ENCODE measurements at regions of chr1 and their contacts with region 1.

Region 1: DNA sequence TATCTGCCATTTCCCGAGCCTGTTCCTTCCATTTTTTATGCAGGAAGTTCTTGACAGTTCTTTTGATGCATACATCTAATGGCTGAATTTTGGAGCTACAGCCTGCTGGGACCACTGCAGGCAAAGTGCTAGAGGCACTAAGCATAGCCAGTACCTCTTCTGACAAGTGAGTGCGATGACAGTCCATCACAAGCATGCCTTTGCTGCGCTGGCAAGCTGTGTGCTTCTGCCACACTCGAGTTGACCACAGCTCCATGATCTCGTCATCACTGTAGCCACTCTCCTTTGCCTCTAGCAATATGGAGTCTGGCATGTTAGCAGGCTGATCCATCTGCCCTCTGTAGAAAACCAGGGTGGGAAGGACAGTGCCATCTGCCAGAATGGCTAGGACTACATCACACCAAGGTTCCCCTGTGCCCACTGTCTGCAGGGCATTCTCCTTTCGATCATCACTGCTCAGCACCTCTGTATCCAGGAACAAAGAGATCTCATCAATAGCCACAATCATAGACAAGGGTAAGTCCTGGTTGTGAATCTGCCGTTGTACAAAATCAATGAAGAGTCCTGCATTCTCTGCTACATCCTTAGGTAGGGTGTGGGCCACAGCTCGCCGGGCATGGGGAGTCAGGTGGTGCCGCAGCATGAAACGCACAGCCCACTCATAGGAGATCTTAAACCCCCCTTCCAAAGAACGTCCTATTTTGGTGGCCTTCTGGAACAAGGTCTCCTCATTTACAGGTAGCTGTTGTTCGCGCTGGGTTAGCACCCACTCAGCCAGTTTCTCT is 6.0 kb downstream of the PSMB4 start:
- DNase-seq: no peak
- ATAC-seq: no peak
- H3K4me3 ChIP-seq: no peak overlapping the region
- H3K27ac ChIP-seq: no peak overlapping the region
- H3K4me1 ChIP-seq: peaks cover 0 to 1% of the 10 kb centered on the region in 2 experiments; a peak in 3 of 5 replicates
- H3K27me3 ChIP-seq: no peaks in the 10 kb centered on the region
- CTCF ChIP-seq: no peak
- EP300 ChIP-seq: no peak
- POLR2A ChIP-seq: no peak
- RAD21 ChIP-seq: no peak

Region 2: DNA sequence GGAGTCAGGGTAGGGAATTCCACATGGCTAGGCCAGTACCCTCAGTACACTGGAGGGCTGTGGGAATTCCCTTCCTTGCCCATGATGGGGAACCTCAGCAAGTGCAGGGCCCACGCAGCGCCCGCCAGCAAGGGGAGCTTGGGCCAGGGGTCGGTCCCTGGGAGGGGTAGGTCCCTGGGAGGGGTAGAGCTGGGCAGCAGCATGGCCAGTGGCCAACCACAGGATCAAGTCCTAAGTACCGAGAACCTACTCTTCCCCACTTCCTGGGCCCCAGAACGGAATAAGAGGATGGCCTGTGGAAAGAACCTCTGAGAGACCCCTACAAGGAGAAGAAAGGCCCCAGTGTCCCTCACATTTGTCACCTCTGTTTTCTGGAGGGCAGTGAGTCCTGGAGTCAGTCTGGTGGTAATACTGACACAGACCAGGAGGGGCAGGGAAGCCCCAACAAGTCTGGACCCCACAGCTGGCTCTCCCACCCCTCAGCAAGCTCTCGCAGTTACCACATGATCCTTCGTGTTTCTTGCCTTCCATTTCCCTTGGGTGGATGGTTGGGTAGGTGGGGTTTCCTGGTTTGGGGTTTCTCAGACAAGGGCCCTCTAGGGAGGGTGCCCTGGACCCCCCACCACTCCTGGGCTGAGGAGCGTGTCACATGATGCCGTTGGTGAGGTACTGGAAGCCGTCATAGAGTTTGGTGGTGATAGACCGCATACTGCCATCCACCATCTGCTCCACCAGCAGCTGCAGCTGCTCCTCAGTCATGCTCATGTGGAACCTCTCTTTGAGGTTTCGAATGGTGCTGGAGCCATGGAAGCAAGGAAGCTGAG is 112.9 kb before region 1 on chr1:
- CTCF ChIA-PET with region 1: no interaction called
- POLR2A ChIA-PET with region 1: no interaction called
- in situ Hi-C with region 1: loop called (anchors 5 kb)
- intact Hi-C with region 1: no loop called
- DNase-seq: peak in 1 of 4 experiments; percentile 27
- ATAC-seq: peak; percentile 62
- H3K4me3 ChIP-seq: no peak overlapping the region
- H3K27ac ChIP-seq: no peak overlapping the region; the same call in 2 of the 3 replicates
- H3K4me1 ChIP-seq: peaks cover 0 to 28% of the 10 kb centered on the region in 2 experiments; a peak in 2 of 5 replicates
- H3K27me3 ChIP-seq: no peaks in the 10 kb centered on the region
- CTCF ChIP-seq: peak in 2 of 3 experiments; percentile 14 to 21; a peak in 1 of 6 replicates
- EP300 ChIP-seq: no peak
- POLR2A ChIP-seq: peak; percentile 67
- RAD21 ChIP-seq: no peak

Region 3: DNA sequence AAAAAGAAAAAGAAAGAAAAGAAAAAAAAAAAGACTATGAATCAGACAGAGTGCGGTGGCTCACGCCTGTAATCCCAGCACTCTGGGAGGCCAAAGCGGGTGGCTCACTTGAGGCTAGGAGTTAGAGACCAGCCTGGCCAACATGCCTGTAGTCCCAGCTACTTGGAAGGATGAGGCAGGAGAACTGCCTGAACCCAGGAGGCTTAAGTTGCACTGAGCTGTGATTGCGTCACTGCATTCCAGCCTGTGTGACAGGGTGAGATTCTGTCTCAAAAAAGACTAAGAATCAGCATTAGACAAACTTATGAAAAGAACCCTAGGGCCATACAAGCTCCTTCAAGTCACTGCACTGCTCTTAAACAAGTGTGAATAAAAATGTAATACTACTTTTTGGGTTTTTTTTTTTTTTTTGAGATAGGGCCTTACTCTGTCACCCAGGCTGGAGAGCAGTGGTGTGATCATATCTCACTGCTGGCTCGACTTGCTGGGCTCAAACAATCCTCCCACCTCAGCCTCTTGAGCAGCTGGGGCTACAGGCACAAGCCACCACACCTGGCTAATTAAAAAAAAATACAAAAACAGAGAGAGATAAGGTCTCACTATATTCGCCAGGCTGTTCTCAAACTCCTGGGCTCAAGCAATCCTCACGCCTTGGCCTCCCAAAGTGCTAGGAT is 11.0 kb after region 1 on chr1:
- CTCF ChIA-PET with region 1: no interaction called
- POLR2A ChIA-PET with region 1: interaction called, 10 read pairs
- in situ Hi-C with region 1: no loop called
- intact Hi-C with region 1: no loop called
- DNase-seq: no peak
- ATAC-seq: peak; percentile 29; the same call in 2 of the 3 replicates
- H3K4me3 ChIP-seq: no peak overlapping the region
- H3K27ac ChIP-seq: no peak overlapping the region
- H3K4me1 ChIP-seq: no peaks in the 10 kb centered on the region
- H3K27me3 ChIP-seq: no peaks in the 10 kb centered on the region
- CTCF ChIP-seq: no peak
- EP300 ChIP-seq: no peak
- POLR2A ChIP-seq: no peak
- RAD21 ChIP-seq: no peak

Measured in K562 (cell line).